ENCODE measurements at regions of chr17 and their contacts with region 1.

Region 1: DNA sequence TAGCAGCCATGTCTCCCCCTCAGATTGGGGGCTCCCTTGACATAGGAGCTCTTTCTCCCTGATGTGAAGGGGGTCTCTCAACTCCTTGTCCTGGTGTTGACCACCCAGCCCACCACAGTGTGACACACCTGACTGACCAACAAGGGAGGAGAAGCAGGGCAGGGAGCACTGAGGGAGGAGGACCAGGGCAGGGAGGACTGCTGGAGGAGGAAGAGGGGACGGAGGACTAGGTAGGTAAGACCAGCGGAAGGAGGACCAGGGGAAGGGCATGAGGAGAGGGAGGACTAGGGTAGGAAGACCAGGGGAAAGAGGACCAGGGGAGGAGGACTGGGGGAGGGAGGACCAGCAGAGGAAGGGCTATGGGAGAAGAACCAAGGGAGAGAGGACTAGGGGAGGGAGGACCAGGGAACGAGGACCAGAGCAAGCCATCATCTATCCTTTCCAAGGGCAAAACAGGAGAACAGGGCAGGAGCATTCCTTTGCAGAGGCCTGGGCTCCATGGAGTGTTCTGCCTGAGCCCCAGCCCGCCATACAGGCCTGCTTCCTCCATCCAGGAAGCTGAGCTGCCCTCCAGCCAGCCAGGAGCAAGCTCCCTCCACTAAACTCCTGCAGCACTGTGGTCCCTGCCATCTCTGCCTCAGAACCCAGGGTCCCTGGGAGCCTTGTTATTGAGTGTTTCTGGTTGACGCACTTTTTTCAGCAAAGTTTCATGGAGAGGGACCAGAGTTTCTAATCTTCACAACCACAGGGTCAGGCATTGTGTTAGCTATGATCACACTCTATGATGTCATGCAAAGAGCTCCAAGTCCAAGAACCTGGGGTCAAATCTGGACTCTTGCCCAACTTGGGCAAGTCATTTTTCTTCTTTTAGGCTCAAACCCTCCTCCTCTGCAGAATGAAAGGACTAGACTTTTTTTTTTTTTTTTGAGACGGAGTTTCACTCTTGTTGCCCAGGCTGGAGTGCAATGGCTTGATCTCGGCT is 15.4 kb upstream of the KRT17 start:
- DNase-seq: no peak
- H3K4me3 Mint-ChIP-seq: no peak overlapping the region
- H3K27ac Mint-ChIP-seq: no peak overlapping the region
- H3K4me1 Mint-ChIP-seq: peaks cover 6% of the 10 kb centered on the region
- H3K27me3 Mint-ChIP-seq: no peaks in the 10 kb centered on the region
- CTCF ChIP-seq: no peak

Region 2: GRCh38 chr17:41624208-41625101 is 15.3 kb before region 1 on chr17 and contains the start of gene KRT17:
- CTCF ChIA-PET with region 1: no interaction called
- POLR2A ChIA-PET with region 1: interaction called, 10 read pairs
- intact Hi-C with region 1: no loop called
- DNase-seq: peak; percentile 93
- H3K4me3 Mint-ChIP-seq: peak within 1 kb of the TSS; percentile 86
- H3K27ac Mint-ChIP-seq: peak within 1 kb of the TSS; percentile 89
- H3K4me1 Mint-ChIP-seq: peaks cover 47% of the 10 kb centered on the region
- H3K27me3 Mint-ChIP-seq: no peaks in the 10 kb centered on the region
- CTCF ChIP-seq: peak; percentile 19
- total RNA-seq, gene KRT17: 1,990 and 4,105 TPM in 2 replicates